ENCODE measurements at regions of chr1 and their contacts with region 1.

Region 1: DNA sequence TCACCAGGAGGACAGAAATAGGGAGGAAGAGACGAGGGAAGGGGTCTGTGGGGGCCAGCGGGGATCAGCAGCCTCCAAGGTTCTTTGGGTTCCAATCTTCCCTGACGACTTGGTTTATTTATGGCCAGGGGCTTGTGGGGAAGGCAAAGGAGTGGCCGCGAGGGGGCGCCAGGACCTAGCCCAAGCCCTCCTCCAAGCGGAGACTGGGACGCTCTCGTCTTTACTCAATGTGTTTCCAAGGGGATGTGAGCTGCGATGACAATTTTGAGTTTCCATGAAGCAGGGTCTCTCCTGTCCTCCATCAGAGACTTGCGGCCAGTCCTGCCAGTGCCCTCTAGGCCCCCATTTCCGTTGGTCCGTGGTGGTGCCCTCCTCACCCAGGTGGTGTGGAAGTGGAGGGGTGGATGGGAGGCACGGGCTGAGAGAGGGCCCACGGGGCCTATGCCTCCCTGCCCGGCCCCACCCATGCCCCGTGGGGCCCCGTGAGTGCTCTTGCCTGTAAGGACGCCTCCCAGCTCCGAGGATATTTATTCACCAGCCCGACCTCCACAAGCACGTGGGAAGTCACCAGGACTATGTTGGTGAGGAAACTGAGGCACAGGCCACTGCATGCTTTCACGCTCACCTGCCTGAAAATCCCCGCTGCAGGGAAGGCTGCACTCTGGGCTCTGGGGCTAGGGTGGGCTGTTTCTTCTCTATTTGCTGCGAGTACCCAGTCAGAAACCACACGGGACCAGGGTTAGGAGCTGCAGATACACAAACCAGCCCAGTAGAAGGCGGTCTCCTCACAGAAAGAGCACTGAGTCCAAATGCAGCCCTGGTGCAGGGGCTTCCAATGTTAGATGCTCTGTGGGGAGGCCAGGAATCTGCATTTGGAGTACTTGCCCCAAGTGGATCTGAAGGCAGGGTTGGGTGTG is 26.5 kb downstream of the DMRTB1 start:
- DNase-seq: peak; percentile 70 to 95
- H3K4me3 ChIP-seq: peak overlapping the region in 1 of 4 experiments; percentile 16; a peak in 1 of 8 replicates
- H3K27ac ChIP-seq: no peak overlapping the region
- H3K4me1 ChIP-seq: peaks cover 0 to 12% (median 3%) of the 10 kb centered on the region in 4 experiments; a peak in 5 of 7 replicates
- H3K27me3 ChIP-seq: peaks cover 0 to 3% (median 2%) of the 10 kb centered on the region in 4 experiments; a peak in 2 of 7 replicates
- CTCF ChIP-seq: peak; percentile 91 to 96 (median 95)
- EP300 ChIP-seq: no peak
- POLR2A ChIP-seq: no peak
- RAD21 ChIP-seq: peak; percentile 95 to 99

Region 2: DNA sequence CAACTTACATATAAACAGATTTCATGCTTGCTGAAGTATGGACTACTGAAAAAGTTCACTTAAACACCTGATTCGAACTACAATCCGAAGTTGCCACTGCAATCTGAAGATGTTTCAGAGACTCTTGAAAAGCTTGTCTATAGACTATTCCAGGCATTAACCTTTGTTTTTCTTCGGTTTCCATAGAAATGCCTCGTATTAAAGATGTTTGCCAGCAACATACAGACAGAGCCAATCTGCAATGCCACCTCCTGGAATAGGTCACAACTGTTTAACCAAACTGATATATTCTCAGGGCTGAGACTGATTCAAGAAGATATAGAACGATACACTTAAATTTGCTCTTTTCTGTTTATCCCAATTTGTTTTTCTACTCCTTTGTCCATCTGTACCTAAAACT is 55.5 kb before region 1 on chr1:
- CTCF ChIA-PET with region 1: no interaction called
- POLR2A ChIA-PET with region 1: no interaction called
- DNase-seq: no peak
- H3K4me3 ChIP-seq: peak overlapping the region in 2 of 4 experiments; percentile 2 to 43; a peak in 2 of 8 replicates
- H3K27ac ChIP-seq: peak overlapping the region; percentile 79
- H3K4me1 ChIP-seq: peaks cover 0 to 13% (median 8%) of the 10 kb centered on the region in 4 experiments; a peak in 4 of 7 replicates
- H3K27me3 ChIP-seq: no peaks in the 10 kb centered on the region
- CTCF ChIP-seq: no peak
- EP300 ChIP-seq: no peak
- POLR2A ChIP-seq: peak in 1 of 2 experiments; percentile 7; a peak in 1 of 3 replicates
- RAD21 ChIP-seq: no peak

Region 3: GRCh38 chr1:53470155-53470554 is 15.6 kb before region 1 on chr1:
- CTCF ChIA-PET with region 1: interaction called, 95 read pairs
- POLR2A ChIA-PET with region 1: interaction called, 3 read pairs
- DNase-seq: peak; percentile 84 to 99
- H3K4me3 ChIP-seq: peak overlapping the region in 1 of 4 experiments; percentile 19; a peak in 2 of 8 replicates
- H3K27ac ChIP-seq: no peak overlapping the region
- H3K4me1 ChIP-seq: peaks cover 0 to 7% (median 4%) of the 10 kb centered on the region in 4 experiments; a peak in 5 of 7 replicates
- H3K27me3 ChIP-seq: peaks cover 0 to 6% (median 2%) of the 10 kb centered on the region in 4 experiments; a peak in 3 of 7 replicates
- CTCF ChIP-seq: peak; percentile 98 to 99 (median 99)
- EP300 ChIP-seq: peak in 1 of 2 experiments; percentile 80; a peak in 2 of 3 replicates
- POLR2A ChIP-seq: no peak
- RAD21 ChIP-seq: peak; percentile 55 to 75

Region 4: DNA sequence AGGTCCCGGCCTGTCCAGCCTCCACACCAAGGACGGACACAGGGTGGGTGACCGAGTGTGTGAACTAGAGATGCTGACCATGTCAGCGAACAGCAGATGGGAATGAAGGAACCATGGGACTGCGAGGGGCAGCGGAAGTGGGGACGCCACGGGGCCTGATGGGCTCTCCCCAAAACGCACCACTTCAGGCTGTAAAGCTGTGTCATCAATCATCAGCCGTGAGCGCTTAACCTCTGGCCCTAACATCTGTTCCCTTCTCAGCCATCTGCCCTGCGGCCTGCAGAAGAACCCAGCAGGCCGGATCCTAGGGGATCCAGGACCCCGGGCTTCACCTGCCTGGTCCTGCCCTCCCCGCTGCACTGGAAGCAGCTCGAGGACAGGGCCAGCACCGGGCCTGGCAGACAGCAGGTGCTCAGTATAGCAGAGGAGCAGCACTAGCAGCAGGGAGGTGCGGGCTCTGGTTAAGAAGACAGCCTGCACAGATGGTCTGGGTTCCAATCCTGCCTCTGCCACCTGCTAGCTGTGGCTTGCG is 32.2 kb after region 1 on chr1:
- CTCF ChIA-PET with region 1: interaction called, 25 read pairs
- POLR2A ChIA-PET with region 1: no interaction called
- DNase-seq: no peak
- H3K4me3 ChIP-seq: no peak overlapping the region
- H3K27ac ChIP-seq: no peak overlapping the region
- H3K4me1 ChIP-seq: 0 out of 7 replicates have a peak, but pooled peaks cover 0 to 2% (median 0%) of the 10 kb centered on the region in 4 experiments
- H3K27me3 ChIP-seq: 0 out of 7 replicates have a peak, but pooled peaks cover 0 to 2% (median 0%) of the 10 kb centered on the region in 4 experiments
- CTCF ChIP-seq: no peak
- EP300 ChIP-seq: no peak
- POLR2A ChIP-seq: no peak
- RAD21 ChIP-seq: no peak

Region 5: GRCh38 chr1:53552146-53552940 is 66.6 kb after region 1 on chr1:
- CTCF ChIA-PET with region 1: interaction called, 10 read pairs
- POLR2A ChIA-PET with region 1: no interaction called
- DNase-seq: peak; percentile 27 to 64
- H3K4me3 ChIP-seq: no peak overlapping the region
- H3K27ac ChIP-seq: no peak overlapping the region
- H3K4me1 ChIP-seq: peaks cover 6 to 26% (median 16%) of the 10 kb centered on the region in 4 experiments
- H3K27me3 ChIP-seq: peaks cover 0 to 6% (median 4%) of the 10 kb centered on the region in 4 experiments; a peak in 3 of 7 replicates
- CTCF ChIP-seq: no peak
- EP300 ChIP-seq: no peak
- POLR2A ChIP-seq: no peak
- RAD21 ChIP-seq: no peak

Region 6: GRCh38 chr1:53592521-53592982 is 106.8 kb after region 1 on chr1:
- CTCF ChIA-PET with region 1: interaction called, 264 read pairs
- POLR2A ChIA-PET with region 1: interaction called, 4 read pairs
- DNase-seq: peak in 1 of 2 experiments; percentile 27
- H3K4me3 ChIP-seq: no peak overlapping the region
- H3K27ac ChIP-seq: no peak overlapping the region
- H3K4me1 ChIP-seq: peaks cover 0 to 7% (median 5%) of the 10 kb centered on the region in 4 experiments; a peak in 5 of 7 replicates
- H3K27me3 ChIP-seq: peaks cover 0 to 7% (median 1%) of the 10 kb centered on the region in 4 experiments; a peak in 4 of 7 replicates
- CTCF ChIP-seq: peak; percentile 22 to 53 (median 48); a peak in 3 of 4 replicates
- EP300 ChIP-seq: no peak
- POLR2A ChIP-seq: no peak
- RAD21 ChIP-seq: peak; percentile 29 to 42; a peak in 2 of 4 replicates

Region 7: GRCh38 chr1:53691326-53691725 is 205.6 kb after region 1 on chr1:
- CTCF ChIA-PET with region 1: interaction called, 129 read pairs
- POLR2A ChIA-PET with region 1: no interaction called
- DNase-seq: no peak
- H3K4me3 ChIP-seq: no peak overlapping the region
- H3K27ac ChIP-seq: no peak overlapping the region
- H3K4me1 ChIP-seq: peaks cover 0 to 15% (median 7%) of the 10 kb centered on the region in 4 experiments; a peak in 5 of 7 replicates
- H3K27me3 ChIP-seq: peaks cover 0 to under 1% (median 0%) of the 10 kb centered on the region in 4 experiments; a peak in 3 of 7 replicates
- CTCF ChIP-seq: no peak
- EP300 ChIP-seq: no peak
- POLR2A ChIP-seq: no peak
- RAD21 ChIP-seq: no peak

Region 8: GRCh38 chr1:53725238-53725689 is 239.5 kb after region 1 on chr1:
- CTCF ChIA-PET with region 1: interaction called, 13 read pairs
- POLR2A ChIA-PET with region 1: no interaction called
- DNase-seq: peak; percentile 36 to 72
- H3K4me3 ChIP-seq: no peak overlapping the region
- H3K27ac ChIP-seq: no peak overlapping the region
- H3K4me1 ChIP-seq: peaks cover 0 to 3% (median 1%) of the 10 kb centered on the region in 4 experiments; a peak in 3 of 7 replicates
- H3K27me3 ChIP-seq: no peaks in the 10 kb centered on the region; a peak in 1 of 7 replicates
- CTCF ChIP-seq: peak; percentile 80 to 98 (median 81)
- EP300 ChIP-seq: no peak
- POLR2A ChIP-seq: no peak
- RAD21 ChIP-seq: peak; percentile 78 to 87

Region 9: GRCh38 chr1:54001591-54001990 is 515.9 kb after region 1 on chr1:
- CTCF ChIA-PET with region 1: no interaction called
- POLR2A ChIA-PET with region 1: no interaction called
- DNase-seq: no peak
- H3K4me3 ChIP-seq: no peak overlapping the region
- H3K27ac ChIP-seq: no peak overlapping the region
- H3K4me1 ChIP-seq: no peaks in the 10 kb centered on the region
- H3K27me3 ChIP-seq: no peaks in the 10 kb centered on the region
- CTCF ChIP-seq: no peak
- EP300 ChIP-seq: no peak
- POLR2A ChIP-seq: no peak
- RAD21 ChIP-seq: no peak

Measured in H1 (cell line).